Body of pancreas (tissue), 4 donors: ENCODE measurements at regions of chr12 and their contacts with region 1.

Region 1: DNA sequence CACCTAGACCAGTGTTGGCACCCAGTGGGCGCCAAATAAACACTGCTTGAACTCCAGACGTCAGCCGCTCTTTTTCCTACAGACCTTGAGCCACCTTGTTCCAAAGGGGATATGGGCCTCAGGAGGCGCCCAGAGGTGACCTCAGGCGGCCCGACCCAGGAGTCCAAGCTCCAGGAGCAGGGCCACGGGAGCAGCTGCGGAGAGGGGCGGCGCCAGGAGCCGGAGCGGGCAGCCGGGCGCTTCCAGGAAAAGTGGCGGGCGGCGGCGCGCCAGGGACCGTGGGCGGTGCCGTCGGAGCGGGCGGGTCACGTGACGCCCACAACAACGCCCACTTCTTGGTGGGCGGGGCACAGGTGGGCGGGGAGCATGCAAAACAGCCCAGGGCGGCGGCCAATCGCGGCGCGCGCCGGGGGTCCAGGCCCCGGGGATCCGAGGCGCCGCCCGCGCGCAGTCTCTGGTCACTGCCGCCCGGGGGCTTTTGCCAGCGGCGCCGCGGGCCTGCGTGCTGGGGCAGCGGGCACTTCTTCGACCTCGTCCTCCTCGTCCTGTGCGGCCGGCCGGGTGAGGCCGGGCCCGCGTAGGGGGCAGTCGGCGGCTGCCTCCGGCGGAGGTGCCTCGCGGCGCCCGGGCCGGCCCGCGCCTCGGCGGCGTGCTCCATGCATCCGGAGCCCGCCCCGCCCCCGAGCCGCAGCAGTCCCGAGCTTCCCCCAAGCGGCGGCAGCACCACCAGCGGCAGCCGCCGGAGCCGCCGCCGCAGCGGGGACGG is at the start of gene ORAI1:
- DNase-seq: peak; percentile 97 to 99 (median 98)
- ATAC-seq: peak; percentile 89
- H3K4me3 ChIP-seq: peak within 1 kb of the TSS; percentile 56 to 59
- H3K27ac ChIP-seq: peak within 1 kb of the TSS; percentile 76 to 96 (median 93)
- H3K4me1 ChIP-seq: peaks cover 36% of the 10 kb centered on the region
- H3K27me3 ChIP-seq: no peaks in the 10 kb centered on the region
- CTCF ChIP-seq: peak in 3 of 7 experiments; percentile 7 to 47 (median 33)
- POLR2A ChIP-seq: peak; percentile 41 to 58 (median 47)
- total RNA-seq, gene ORAI1: 0.66 to 3.9 TPM

Region 2: GRCh38 chr12:121579981-121580868 is 46.0 kb before region 1 on chr12:
- intact Hi-C with region 1: loop called (anchors 10 kb)
- DNase-seq: peak; percentile 73 to 85 (median 78)
- ATAC-seq: peak; percentile 75
- H3K4me3 ChIP-seq: peak overlapping the region; percentile 49 to 61
- H3K27ac ChIP-seq: peak overlapping the region; percentile 46 to 85 (median 74)
- H3K4me1 ChIP-seq: peaks cover 44% of the 10 kb centered on the region
- H3K27me3 ChIP-seq: no peaks in the 10 kb centered on the region
- CTCF ChIP-seq: no peak
- POLR2A ChIP-seq: peak in 2 of 3 donors; percentile 11 to 20

Region 3: GRCh38 chr12:121663610-121663929 is 37.3 kb after region 1 on chr12:
- intact Hi-C with region 1: no loop called
- DNase-seq: no peak
- ATAC-seq: no peak
- H3K4me3 ChIP-seq: no peak overlapping the region
- H3K27ac ChIP-seq: no peak overlapping the region
- H3K4me1 ChIP-seq: no peaks in the 10 kb centered on the region
- H3K27me3 ChIP-seq: no peaks in the 10 kb centered on the region
- CTCF ChIP-seq: no peak
- POLR2A ChIP-seq: no peak

Region 4: DNA sequence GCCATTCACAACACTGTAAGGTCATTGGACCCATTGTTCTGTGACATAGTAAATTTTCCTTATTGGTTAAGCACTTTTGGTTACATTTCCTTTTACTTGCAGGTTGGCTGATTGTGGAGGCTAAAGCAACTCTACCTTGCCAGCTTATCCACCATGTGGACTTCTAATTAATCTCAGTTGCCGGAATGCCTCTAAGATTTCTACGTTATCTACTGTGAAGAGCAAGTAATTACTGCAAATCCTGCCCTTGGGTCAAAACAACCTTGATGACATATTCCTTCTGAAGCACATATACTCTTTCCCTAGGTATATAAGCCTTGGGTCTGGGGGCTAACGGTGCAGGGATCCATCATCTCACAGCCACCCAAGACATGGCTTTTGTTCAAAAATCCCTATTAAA is 62.7 kb after region 1 on chr12:
- intact Hi-C with region 1: loop called (anchors 10 kb)
- DNase-seq: no peak
- ATAC-seq: no peak
- H3K4me3 ChIP-seq: no peak overlapping the region
- H3K27ac ChIP-seq: no peak overlapping the region
- H3K4me1 ChIP-seq: peaks cover 5% of the 10 kb centered on the region
- H3K27me3 ChIP-seq: no peaks in the 10 kb centered on the region
- CTCF ChIP-seq: no peak
- POLR2A ChIP-seq: no peak

Region 5: DNA sequence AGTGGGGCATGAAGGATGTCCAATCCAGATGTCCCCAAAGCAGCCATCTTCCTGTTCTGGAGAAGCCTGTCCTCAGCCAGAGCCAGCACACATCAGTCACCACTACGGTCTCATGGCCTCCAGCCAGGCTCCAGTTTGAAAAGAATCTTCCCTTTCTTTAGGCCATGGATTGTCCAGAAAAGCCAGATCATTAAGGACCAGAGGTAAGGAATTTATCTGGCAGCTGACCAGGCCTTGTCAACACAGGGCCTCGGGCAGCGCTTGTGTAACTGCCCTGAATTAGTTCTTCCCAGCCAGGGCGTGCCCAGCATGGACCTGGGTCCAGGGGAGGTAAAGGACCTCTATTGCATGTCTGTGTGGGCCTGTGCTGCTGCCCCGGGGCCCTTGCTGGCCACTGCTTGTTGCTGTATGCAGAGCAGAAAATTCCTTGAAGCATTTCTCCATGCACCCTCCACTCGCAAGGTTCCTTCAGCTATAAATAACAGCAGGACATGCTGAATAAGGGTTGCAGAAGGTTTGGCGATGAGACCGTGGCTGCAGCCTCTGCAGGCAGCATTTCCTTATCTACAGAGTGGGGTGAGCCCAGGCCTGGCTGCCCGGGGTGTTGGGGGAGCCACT is 1291.3 kb after region 1 on chr12:
- intact Hi-C with region 1: no loop called
- DNase-seq: peak; percentile 55 to 74 (median 67)
- ATAC-seq: peak; percentile 82
- H3K4me3 ChIP-seq: no peak overlapping the region
- H3K27ac ChIP-seq: peak overlapping the region; percentile 12 to 45 (median 30)
- H3K4me1 ChIP-seq: peaks cover 9% of the 10 kb centered on the region
- H3K27me3 ChIP-seq: no peaks in the 10 kb centered on the region
- CTCF ChIP-seq: no peak
- POLR2A ChIP-seq: no peak